Cardiac septum (tissue), 1 donor: ENCODE measurements at regions of chr18 and their contacts with region 1.

Region 1: GRCh38 chr18:13221869-13222855 is 3.6 kb downstream of the LDLRAD4 start:
- DNase-seq: peak; percentile 87

Region 2: DNA sequence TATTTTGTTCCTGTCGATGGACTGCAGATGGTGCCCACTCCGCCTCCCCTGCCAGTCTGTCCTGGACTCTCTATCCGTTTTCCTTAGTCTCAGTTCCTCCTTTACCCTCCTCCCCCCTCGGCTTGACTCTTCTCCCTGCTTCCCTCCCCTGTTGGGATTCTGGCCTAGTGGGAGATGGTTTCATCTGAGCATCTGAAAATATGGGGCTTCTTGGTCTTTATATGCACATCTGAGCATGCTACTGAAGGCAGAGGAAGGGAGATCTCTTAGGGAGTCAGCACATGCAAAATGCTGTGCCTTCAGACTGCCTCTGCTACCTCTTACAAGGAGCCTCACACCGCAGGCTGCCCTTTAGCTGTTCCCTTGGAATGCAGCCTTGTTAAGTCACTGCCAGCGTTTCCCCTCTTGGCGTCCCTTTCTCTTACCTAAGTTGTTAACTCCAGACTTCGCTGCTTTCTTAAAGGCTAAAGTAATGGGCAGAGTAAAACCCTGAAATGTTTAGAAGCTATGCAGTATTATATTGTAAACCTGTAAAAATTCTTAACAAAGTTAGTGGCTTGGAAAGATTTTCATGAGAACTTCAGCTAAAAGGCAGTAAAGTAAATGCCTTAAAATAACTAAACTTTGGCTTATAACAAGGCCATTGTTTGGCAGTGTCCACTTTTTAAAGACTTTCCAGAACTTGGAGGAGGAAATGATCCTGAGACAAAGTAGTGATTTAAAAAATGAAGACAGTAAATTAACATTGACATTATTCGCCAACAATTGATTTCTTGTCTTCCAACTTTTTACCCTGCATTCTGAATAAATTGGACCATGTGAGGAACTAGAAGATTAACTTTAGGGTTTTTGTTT is 46.2 kb after region 1 on chr18:
- intact Hi-C with region 1: loop called (anchors 1 kb)
- DNase-seq: no peak

Region 3: DNA sequence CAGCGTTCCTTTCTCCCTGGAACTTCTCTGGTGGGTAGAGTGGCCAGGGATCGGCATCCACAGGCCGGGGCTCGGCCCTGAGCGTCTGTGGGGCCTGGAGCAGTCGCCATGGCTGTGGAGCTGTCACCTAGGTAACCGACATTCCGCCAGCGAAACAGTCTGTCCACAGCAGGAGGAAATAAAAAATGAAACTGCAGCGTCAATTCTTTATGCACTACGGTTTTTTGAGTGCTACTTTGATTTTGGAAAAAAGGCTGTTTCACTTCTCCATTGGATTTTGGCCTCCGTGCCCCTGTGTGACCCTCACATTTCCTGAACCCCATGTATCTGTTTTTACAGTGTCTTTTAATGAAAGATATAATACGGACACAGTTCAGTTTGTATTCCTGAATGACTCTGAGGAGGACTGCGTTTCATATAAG is 159.8 kb after region 1 on chr18:
- intact Hi-C with region 1: loop called (anchors 2 kb)
- DNase-seq: peak; percentile 77

Region 4: GRCh38 chr18:13452388-13452811 is 230.2 kb after region 1 on chr18:
- intact Hi-C with region 1: loop called (anchors 5 kb)
- DNase-seq: peak; percentile 69